GM12878 (cell line): ENCODE measurements at regions of chr1 and their contacts with region 1.

Region 1: DNA sequence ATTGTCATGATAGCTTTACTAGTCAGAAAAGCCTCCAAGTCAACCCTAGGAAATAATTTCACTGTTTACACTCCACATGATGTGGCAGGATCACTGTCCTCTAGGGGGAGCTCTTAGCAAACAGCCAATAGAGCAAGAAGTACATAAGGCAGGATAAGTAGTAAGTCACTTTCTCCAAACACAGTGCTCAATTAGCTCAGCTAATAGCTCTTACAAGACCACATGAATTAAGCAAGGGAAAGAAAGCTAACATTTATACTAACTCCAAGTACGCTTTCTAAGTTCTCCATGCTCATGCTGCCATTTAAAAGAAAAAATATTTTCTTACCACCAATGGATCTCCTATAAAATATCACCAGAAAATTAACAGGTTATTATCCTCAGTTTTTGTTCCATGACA is 66.9 kb upstream of the LRIF1 start:
- DNase-seq: peak; percentile 45
- ATAC-seq: peak; percentile 95
- H3K4me3 ChIP-seq: no peak overlapping the region
- H3K27ac ChIP-seq: no peak overlapping the region
- H3K4me1 ChIP-seq: no peaks in the 10 kb centered on the region
- H3K27me3 ChIP-seq: no peaks in the 10 kb centered on the region
- CTCF ChIP-seq: peak; percentile 80 to 90 (median 90)
- EP300 ChIP-seq: no peak
- POLR2A ChIP-seq: no peak
- RAD21 ChIP-seq: peak; percentile 69

Region 2: DNA sequence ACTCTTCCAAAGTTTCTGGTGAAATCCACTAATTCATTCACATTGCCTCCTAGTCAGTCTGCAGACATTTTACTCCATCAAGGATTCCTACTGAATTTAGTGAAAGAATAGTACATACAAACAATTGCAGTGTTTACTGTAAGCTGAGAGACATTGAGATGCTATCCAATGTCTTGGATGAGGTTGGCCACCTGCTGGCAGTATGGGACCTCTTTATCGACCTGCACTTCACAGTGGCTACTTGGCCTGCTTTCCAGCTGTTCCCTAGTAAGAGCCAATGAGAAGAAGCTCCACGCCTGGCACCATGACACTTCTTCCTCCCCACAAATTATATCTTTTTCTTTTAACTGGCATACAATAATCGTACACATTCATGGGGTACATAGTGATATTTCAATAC is 15.4 kb before region 1 on chr1:
- CTCF ChIA-PET with region 1: interaction called, 25 read pairs
- POLR2A ChIA-PET with region 1: no interaction called
- RAD21 ChIA-PET with region 1: no interaction called
- SMC1A ChIA-PET with region 1: interaction called, 3 read pairs
- in situ Hi-C with region 1: no loop called
- intact Hi-C with region 1: no loop called
- DNase-seq: no peak
- ATAC-seq: no peak
- H3K4me3 ChIP-seq: no peak overlapping the region
- H3K27ac ChIP-seq: no peak overlapping the region
- H3K4me1 ChIP-seq: no peaks in the 10 kb centered on the region
- H3K27me3 ChIP-seq: no peaks in the 10 kb centered on the region
- CTCF ChIP-seq: peak in 2 of 3 experiments; percentile 8 to 9; a peak in 1 of 6 replicates
- EP300 ChIP-seq: no peak
- POLR2A ChIP-seq: no peak
- RAD21 ChIP-seq: 0 out of 2 replicates have a peak, but pooled peaks have one; percentile 4

Region 3: DNA sequence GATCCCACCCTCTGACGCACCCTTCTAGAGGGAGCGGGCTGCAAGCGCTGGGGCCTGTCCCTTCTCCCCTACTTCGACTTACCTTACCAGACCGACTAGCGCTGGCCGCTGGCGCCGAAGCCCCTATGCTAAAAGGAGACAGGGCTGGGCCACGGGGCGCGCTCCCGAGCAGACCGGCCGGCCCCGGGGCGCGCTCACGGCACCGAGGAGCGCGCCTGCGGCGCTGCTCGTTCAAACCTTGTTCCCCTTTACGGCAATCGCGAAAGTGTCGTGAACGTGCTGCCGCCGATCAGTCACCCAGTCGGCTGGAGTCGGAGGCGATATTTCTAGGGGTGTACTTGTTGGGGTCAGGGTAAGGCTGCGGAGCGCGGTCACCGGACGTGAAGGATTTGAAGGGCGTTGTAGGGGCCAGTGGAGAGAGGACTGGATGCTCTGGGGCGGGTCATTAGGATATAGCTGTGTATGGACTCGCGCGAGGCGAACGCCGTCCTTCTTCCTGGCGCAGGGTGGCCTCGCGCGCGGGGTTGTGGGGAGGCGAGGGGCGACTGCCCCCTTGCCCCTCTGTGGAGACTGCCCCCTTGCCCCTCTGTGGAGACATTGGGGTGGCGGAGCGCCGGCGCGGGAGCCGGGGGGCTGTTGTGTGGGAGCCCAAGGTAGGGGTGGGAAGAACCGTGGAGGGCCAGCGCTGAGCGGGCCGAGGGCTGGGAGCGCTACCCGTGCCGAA is 109.5 kb after region 1 on chr1 and contains the starts of genes CEPT1 and DRAM2:
- CTCF ChIA-PET with region 1: interaction called, 14 read pairs
- POLR2A ChIA-PET with region 1: no interaction called
- RAD21 ChIA-PET with region 1: interaction called, 5 read pairs
- SMC1A ChIA-PET with region 1: interaction called, 7 read pairs
- in situ Hi-C with region 1: no loop called
- intact Hi-C with region 1: loop called (anchors 5 kb)
- DNase-seq: peak; percentile 76
- ATAC-seq: peak; percentile 73
- H3K4me3 ChIP-seq: peak within 1 kb of the TSS; percentile 95
- H3K27ac ChIP-seq: peak within 1 kb of the TSS; percentile 89
- H3K4me1 ChIP-seq: peaks cover 14% of the 10 kb centered on the region
- H3K27me3 ChIP-seq: no peaks in the 10 kb centered on the region
- CTCF ChIP-seq: no peak
- EP300 ChIP-seq: no peak
- POLR2A ChIP-seq: peak; percentile 90
- RAD21 ChIP-seq: no peak
- polyA plus RNA-seq, gene CEPT1: 29.4 to 55.5 TPM
- polyA plus RNA-seq, gene DRAM2: 88.3 to 146 TPM

Region 4: DNA sequence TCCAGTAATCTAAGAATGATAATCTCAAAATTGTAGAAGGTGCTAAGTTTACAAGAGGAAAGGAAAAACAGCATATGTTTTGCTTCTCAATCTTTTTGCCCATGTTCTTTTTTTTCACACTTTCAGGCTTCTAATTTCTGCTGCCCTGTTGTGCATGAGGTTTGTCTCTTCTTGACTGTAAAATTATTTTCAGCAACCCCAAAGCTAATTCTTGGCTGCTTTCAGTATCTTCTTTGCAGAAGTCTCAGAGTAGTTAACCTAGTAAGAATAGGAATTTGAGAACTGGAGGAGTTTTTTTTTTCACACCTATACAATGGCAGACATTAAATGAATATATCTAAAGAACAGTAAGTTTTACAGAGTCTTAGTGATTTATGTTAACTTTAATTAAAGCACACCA is 143.5 kb after region 1 on chr1:
- CTCF ChIA-PET with region 1: interaction called, 17 read pairs
- POLR2A ChIA-PET with region 1: no interaction called
- RAD21 ChIA-PET with region 1: no interaction called
- SMC1A ChIA-PET with region 1: interaction called, 10 read pairs
- in situ Hi-C with region 1: no loop called
- intact Hi-C with region 1: no loop called
- DNase-seq: no peak
- ATAC-seq: peak; percentile 54
- H3K4me3 ChIP-seq: no peak overlapping the region
- H3K27ac ChIP-seq: no peak overlapping the region
- H3K4me1 ChIP-seq: peaks cover 14% of the 10 kb centered on the region
- H3K27me3 ChIP-seq: no peaks in the 10 kb centered on the region
- CTCF ChIP-seq: no peak
- EP300 ChIP-seq: no peak
- POLR2A ChIP-seq: no peak
- RAD21 ChIP-seq: no peak

Region 5: GRCh38 chr1:111197598-111198284 is 167.2 kb after region 1 on chr1:
- CTCF ChIA-PET with region 1: interaction called, 19 read pairs
- POLR2A ChIA-PET with region 1: no interaction called
- RAD21 ChIA-PET with region 1: interaction called, 8 read pairs
- SMC1A ChIA-PET with region 1: interaction called, 11 read pairs
- in situ Hi-C with region 1: no loop called
- intact Hi-C with region 1: loop called (anchors 5 kb)
- DNase-seq: no peak
- ATAC-seq: peak; percentile 28
- H3K4me3 ChIP-seq: peak overlapping the region; percentile 73
- H3K27ac ChIP-seq: peak overlapping the region; percentile 92
- H3K4me1 ChIP-seq: peaks cover 40% of the 10 kb centered on the region
- H3K27me3 ChIP-seq: no peaks in the 10 kb centered on the region
- CTCF ChIP-seq: peak; percentile 54 to 65 (median 55)
- EP300 ChIP-seq: no peak
- POLR2A ChIP-seq: no peak
- RAD21 ChIP-seq: peak; percentile 58

Region 6: DNA sequence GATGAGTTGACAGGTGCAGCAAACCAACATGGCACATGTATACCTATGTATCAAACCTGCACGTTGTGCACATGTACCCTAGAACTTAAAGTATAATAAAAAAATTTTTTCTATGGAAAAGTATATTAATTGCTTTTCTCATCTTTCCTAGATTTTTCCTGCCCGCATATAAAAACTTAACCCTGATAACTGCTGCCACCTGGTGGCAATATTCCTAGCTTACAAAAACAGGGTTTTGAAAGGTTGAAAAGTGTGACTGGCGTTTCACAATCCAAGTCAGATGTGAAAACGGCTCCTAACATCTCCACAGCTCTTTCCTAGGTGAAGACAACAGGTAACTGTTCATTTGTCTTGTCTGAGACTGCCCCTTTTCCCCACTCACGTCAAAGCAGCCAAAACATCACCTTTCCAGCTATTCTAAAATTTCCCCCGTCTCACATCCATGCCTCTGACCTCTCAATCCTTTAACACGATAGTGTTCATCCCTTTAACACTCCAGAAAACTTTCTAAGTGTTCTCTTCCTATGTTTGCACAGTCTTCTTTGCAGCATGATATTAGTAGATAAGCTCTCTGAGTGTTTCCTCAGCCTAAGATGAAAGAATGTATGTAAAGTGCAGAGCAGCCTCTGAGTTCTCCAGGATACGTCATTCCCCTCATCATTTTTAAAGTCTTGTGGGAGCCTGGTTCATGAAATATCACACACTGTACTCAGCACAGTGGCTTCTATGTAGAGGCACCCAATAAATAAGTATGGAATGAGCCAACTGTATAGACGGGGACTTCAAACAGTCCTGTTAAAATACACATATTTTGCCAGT is 369.4 kb after region 1 on chr1:
- CTCF ChIA-PET with region 1: interaction called, 76 read pairs
- POLR2A ChIA-PET with region 1: no interaction called
- RAD21 ChIA-PET with region 1: interaction called, 24 read pairs
- SMC1A ChIA-PET with region 1: interaction called, 29 read pairs
- in situ Hi-C with region 1: no loop called
- intact Hi-C with region 1: loop called (anchors 2 kb)
- DNase-seq: peak; percentile 15
- ATAC-seq: peak; percentile 44; the same call in 2 of the 3 replicates
- H3K4me3 ChIP-seq: no peak overlapping the region
- H3K27ac ChIP-seq: no peak overlapping the region
- H3K4me1 ChIP-seq: no peaks in the 10 kb centered on the region
- H3K27me3 ChIP-seq: no peaks in the 10 kb centered on the region
- CTCF ChIP-seq: peak; percentile 60 to 64 (median 60)
- EP300 ChIP-seq: no peak
- POLR2A ChIP-seq: no peak
- RAD21 ChIP-seq: peak; percentile 86